Endothelial cell of umbilical vein (primary cell): ENCODE measurements at regions of chr6 and their contacts with region 1.

Region 1: GRCh38 chr6:149963462-149964307 is at the start of gene ULBP1:
- DNase-seq: peak; percentile 67
- H3K4me3 ChIP-seq: peak within 1 kb of the TSS; percentile 44 to 55 (median 49)
- H3K27ac ChIP-seq: no peak within 1 kb of the TSS
- H3K4me1 ChIP-seq: peaks cover 18% of the 10 kb centered on the region
- H3K27me3 ChIP-seq: peaks cover 12 to 37% of the 10 kb centered on the region in 2 experiments
- CTCF ChIP-seq: no peak
- POLR2A ChIP-seq: no peak
- total RNA-seq, gene ULBP1: 0.33 and 2.3 TPM in 2 replicates

Region 2: GRCh38 chr6:149032599-149033405 is 930.9 kb before region 1 on chr6:
- CTCF ChIA-PET with region 1: no interaction called
- POLR2A ChIA-PET with region 1: no interaction called
- dilution Hi-C with region 1: no loop called
- intact Hi-C with region 1: no loop called
- DNase-seq: no peak
- H3K4me3 ChIP-seq: no peak overlapping the region
- H3K27ac ChIP-seq: no peak overlapping the region
- H3K4me1 ChIP-seq: no peaks in the 10 kb centered on the region
- H3K27me3 ChIP-seq: peaks cover 5% of the 10 kb centered on the region in 2 experiments
- CTCF ChIP-seq: no peak
- POLR2A ChIP-seq: no peak

Region 3: DNA sequence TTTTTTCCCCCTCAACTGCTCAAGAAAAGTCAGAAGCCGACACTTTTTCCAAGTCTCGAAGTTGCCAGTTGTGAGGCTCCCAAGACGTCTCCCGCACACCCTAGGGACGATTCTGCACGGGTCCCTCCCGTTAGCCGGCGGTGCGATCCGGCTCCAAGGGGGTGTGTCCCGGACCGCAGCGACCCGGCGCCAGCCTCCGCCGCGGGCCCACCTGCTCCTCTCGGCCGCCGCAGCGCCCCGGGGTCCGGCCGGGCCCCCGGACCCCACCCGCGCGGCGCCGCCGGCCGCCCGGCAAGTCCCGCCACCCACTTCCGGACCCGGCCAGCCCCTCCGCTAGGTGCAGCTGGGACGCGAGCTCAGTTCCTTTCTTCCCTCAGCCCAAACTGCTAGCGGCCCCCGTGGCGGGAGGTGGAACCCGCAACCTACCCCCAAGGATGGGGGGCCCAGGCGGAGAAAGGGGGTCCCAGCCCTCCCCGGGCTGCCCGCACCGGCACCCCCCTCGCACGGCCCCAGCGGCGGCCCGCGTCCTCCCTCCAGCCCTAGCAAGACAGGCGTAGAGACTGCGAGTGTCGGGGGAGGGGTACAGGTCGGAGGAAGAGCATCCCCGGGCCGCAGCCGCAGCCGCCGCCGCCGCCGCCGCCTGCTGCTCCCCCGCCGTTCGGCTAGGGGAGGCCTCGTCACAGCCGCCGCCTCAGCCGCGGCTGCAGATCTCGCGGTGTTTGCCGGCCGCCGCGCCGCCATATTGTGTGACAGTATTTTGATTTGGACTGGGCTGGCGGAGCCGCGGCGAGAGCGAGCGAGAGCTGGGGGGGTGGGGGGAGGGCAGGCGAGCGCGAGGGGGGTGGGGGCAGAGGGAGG is 646.7 kb before region 1 on chr6:
- CTCF ChIA-PET with region 1: no interaction called
- POLR2A ChIA-PET with region 1: no interaction called
- dilution Hi-C with region 1: no loop called
- intact Hi-C with region 1: no loop called
- DNase-seq: peak; percentile 90
- H3K4me3 ChIP-seq: peak overlapping the region; percentile 69 to 97 (median 79)
- H3K27ac ChIP-seq: peak overlapping the region; percentile 92
- H3K4me1 ChIP-seq: peaks cover 18% of the 10 kb centered on the region
- H3K27me3 ChIP-seq: peaks cover 18 to 30% of the 10 kb centered on the region in 2 experiments
- CTCF ChIP-seq: no peak
- POLR2A ChIP-seq: no peak

Region 4: GRCh38 chr6:149823013-149823412 is 140.7 kb before region 1 on chr6:
- CTCF ChIA-PET with region 1: no interaction called
- POLR2A ChIA-PET with region 1: no interaction called
- dilution Hi-C with region 1: no loop called
- intact Hi-C with region 1: no loop called
- DNase-seq: no peak
- H3K4me3 ChIP-seq: no peak overlapping the region
- H3K27ac ChIP-seq: no peak overlapping the region
- H3K4me1 ChIP-seq: no peaks in the 10 kb centered on the region
- H3K27me3 ChIP-seq: no peaks in the 10 kb centered on the region
- CTCF ChIP-seq: no peak
- POLR2A ChIP-seq: no peak

Region 5: GRCh38 chr6:149884215-149884614 is 79.5 kb before region 1 on chr6:
- CTCF ChIA-PET with region 1: no interaction called
- POLR2A ChIA-PET with region 1: no interaction called
- dilution Hi-C with region 1: no loop called
- intact Hi-C with region 1: no loop called
- DNase-seq: no peak
- H3K4me3 ChIP-seq: no peak overlapping the region
- H3K27ac ChIP-seq: no peak overlapping the region
- H3K4me1 ChIP-seq: no peaks in the 10 kb centered on the region
- H3K27me3 ChIP-seq: peaks cover 0 to 5% of the 10 kb centered on the region in 2 experiments
- CTCF ChIP-seq: no peak
- POLR2A ChIP-seq: no peak

Region 6: GRCh38 chr6:149934249-149935156 is 29.2 kb before region 1 on chr6:
- CTCF ChIA-PET with region 1: interaction called, 3 read pairs
- POLR2A ChIA-PET with region 1: no interaction called
- dilution Hi-C with region 1: no loop called
- intact Hi-C with region 1: loop called (anchors 2 kb)
- DNase-seq: peak; percentile 74
- H3K4me3 ChIP-seq: no peak overlapping the region
- H3K27ac ChIP-seq: no peak overlapping the region
- H3K4me1 ChIP-seq: peaks cover 10% of the 10 kb centered on the region
- H3K27me3 ChIP-seq: peaks cover 63 to 75% of the 10 kb centered on the region in 2 experiments
- CTCF ChIP-seq: peak; percentile 54 to 64
- POLR2A ChIP-seq: no peak

Region 7: DNA sequence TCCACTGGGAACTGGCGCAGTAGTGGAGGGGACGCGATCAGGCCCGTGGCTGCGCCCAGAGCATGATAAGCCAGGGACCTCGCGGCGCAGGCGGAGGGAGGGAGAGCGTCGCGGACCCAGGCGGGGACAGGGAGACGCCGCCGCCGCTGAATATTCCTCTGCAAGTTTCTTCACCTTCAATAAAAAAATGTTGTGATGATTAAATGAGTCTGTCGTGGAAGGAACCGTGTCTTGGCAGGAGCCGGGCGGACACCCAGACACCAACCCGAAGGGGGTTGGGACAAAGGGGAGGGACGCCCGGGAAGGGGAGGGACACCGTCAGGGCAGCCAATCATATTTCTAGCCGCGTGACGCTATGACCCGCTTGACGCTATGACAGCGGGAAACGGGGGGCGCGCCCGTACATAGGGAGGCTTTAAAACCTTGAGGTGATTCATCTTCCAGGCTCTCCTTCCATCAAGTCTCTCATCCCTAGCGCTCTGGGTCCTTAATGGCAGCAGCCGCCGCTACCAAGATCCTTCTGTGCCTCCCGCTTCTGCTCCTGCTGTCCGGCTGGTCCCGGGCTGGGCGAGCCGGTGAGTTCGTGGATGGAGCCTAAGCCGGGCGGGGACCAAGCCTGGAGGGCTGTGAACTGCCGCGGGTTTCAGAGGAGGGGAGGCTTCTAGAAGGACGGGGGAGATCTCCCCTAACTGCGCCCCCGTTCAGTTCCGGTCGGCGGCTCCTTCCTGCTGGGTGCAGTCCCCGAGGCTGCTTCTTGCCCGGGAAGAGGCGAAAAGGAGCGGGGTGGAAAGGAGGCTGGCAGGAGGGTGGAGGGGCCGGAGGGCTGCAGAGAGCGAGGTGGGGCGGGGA is 21.9 kb before region 1 on chr6 and contains the start of gene ULBP2:
- CTCF ChIA-PET with region 1: interaction called, 3 read pairs
- POLR2A ChIA-PET with region 1: no interaction called
- dilution Hi-C with region 1: no loop called
- intact Hi-C with region 1: loop called (anchors 2 kb)
- DNase-seq: peak; percentile 97
- H3K4me3 ChIP-seq: peak within 1 kb of the TSS; percentile 72 to 84 (median 73)
- H3K27ac ChIP-seq: peak within 1 kb of the TSS; percentile 34
- H3K4me1 ChIP-seq: peaks cover 14% of the 10 kb centered on the region
- H3K27me3 ChIP-seq: peaks cover 28 to 37% of the 10 kb centered on the region in 2 experiments
- CTCF ChIP-seq: no peak
- POLR2A ChIP-seq: peak; percentile 98
- total RNA-seq, gene ULBP2: 7.0 and 14.0 TPM in 2 replicates

Region 8: DNA sequence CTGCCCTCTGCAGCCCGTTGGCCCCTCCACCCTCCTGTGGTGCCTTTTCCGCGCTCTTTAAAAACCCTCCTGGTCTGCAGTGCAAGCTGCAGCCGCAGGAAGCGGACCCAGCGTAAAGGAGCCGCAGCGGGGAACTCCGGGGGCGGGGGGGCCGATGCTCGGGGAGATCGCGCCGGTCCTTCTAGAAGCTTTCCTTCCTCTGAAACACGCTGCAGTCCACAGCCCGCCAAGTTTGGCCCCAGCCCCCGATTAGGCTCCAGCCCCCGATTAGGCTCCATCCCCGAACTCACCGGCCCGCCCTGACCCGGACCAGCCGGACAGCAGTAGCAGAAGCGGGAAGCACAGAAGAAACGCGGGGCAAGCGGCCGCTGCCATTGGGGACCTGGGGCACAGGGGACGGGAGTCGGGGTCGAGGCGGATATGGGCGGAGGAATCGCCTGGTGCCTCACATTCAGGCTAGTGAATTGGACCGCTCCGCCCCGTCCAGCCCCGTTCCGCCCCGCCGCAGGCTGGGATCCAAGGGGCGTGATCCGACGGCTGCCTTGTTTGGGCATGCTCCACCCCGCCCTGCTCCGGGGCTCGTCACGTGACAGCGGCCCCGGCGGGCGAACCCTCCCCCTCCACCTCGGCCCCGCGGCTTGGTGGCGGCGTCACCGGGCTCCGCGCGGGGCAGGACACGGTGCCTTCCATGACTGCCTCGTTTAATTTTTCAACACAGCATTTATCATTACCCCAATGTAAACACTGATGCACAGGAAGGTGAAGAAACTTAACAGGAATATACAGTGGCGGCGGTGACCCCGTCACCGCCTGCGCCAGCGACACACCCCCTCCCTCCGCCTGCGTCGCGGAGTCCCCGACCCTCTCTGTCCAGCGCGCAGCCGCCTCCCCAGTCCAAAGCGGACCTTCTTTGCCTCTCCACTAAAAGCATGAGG is 41.4 kb after region 1 on chr6:
- CTCF ChIA-PET with region 1: interaction called, 3 read pairs
- POLR2A ChIA-PET with region 1: no interaction called
- dilution Hi-C with region 1: no loop called
- intact Hi-C with region 1: loop called (anchors 2 kb)
- DNase-seq: peak; percentile 89
- H3K4me3 ChIP-seq: peak overlapping the region; percentile 28 to 82 (median 50)
- H3K27ac ChIP-seq: no peak overlapping the region
- H3K4me1 ChIP-seq: peaks cover 2% of the 10 kb centered on the region
- H3K27me3 ChIP-seq: peaks cover 8 to 13% of the 10 kb centered on the region in 2 experiments
- CTCF ChIP-seq: peak in 1 of 2 donors; percentile 32
- POLR2A ChIP-seq: peak; percentile 39